CD8-positive, alpha-beta T cell (primary cell): ENCODE measurements at regions of chr19 and their contacts with region 1.

Region 1: GRCh38 chr19:49391581-49392399 is 3.7 kb downstream of the KASH5 start:
- DNase-seq: peak; percentile 61 to 89 (median 81)
- ATAC-seq: peak; percentile 80
- H3K4me3 ChIP-seq: no peak overlapping the region
- H3K4me3 Mint-ChIP-seq: no peak overlapping the region
- H3K27ac ChIP-seq: peak overlapping the region in 1 of 2 experiments; percentile 20
- H3K27ac Mint-ChIP-seq: peak overlapping the region; percentile 46
- H3K4me1 ChIP-seq: peaks cover 16% of the 10 kb centered on the region
- H3K4me1 Mint-ChIP-seq: peaks cover 11% of the 10 kb centered on the region
- H3K27me3 ChIP-seq: no peaks in the 10 kb centered on the region
- H3K27me3 Mint-ChIP-seq: no peaks in the 10 kb centered on the region
- CTCF ChIP-seq: peak; percentile 95

Region 2: GRCh38 chr19:48835734-48836088 is 556.1 kb before region 1 on chr19:
- CTCF ChIA-PET with region 1: no interaction called
- POLR2A ChIA-PET with region 1: no interaction called
- intact Hi-C with region 1: no loop called
- DNase-seq: peak; percentile 87 to 96 (median 92)
- ATAC-seq: peak; percentile 86
- H3K4me3 ChIP-seq: peak overlapping the region; percentile 42 to 51
- H3K4me3 Mint-ChIP-seq: peak overlapping the region; percentile 83
- H3K27ac ChIP-seq: no peak overlapping the region
- H3K27ac Mint-ChIP-seq: peak overlapping the region; percentile 50
- H3K4me1 ChIP-seq: peaks cover 22% of the 10 kb centered on the region
- H3K4me1 Mint-ChIP-seq: peaks cover 20% of the 10 kb centered on the region
- H3K27me3 ChIP-seq: peaks cover 0 to 5% of the 10 kb centered on the region in 2 experiments
- H3K27me3 Mint-ChIP-seq: peaks cover 5% of the 10 kb centered on the region
- CTCF ChIP-seq: peak; percentile 66

Region 3: GRCh38 chr19:49403404-49404187 is 11.8 kb after region 1 on chr19:
- CTCF ChIA-PET with region 1: interaction called, 16 read pairs
- POLR2A ChIA-PET with region 1: interaction called, 3 read pairs
- intact Hi-C with region 1: no loop called
- DNase-seq: no peak
- ATAC-seq: no peak
- H3K4me3 ChIP-seq: no peak overlapping the region
- H3K4me3 Mint-ChIP-seq: no peak overlapping the region
- H3K27ac ChIP-seq: no peak overlapping the region
- H3K27ac Mint-ChIP-seq: no peak overlapping the region
- H3K4me1 ChIP-seq: peaks cover 14% of the 10 kb centered on the region
- H3K4me1 Mint-ChIP-seq: peaks cover 23% of the 10 kb centered on the region
- H3K27me3 ChIP-seq: no peaks in the 10 kb centered on the region
- H3K27me3 Mint-ChIP-seq: no peaks in the 10 kb centered on the region
- CTCF ChIP-seq: no peak

Region 4: DNA sequence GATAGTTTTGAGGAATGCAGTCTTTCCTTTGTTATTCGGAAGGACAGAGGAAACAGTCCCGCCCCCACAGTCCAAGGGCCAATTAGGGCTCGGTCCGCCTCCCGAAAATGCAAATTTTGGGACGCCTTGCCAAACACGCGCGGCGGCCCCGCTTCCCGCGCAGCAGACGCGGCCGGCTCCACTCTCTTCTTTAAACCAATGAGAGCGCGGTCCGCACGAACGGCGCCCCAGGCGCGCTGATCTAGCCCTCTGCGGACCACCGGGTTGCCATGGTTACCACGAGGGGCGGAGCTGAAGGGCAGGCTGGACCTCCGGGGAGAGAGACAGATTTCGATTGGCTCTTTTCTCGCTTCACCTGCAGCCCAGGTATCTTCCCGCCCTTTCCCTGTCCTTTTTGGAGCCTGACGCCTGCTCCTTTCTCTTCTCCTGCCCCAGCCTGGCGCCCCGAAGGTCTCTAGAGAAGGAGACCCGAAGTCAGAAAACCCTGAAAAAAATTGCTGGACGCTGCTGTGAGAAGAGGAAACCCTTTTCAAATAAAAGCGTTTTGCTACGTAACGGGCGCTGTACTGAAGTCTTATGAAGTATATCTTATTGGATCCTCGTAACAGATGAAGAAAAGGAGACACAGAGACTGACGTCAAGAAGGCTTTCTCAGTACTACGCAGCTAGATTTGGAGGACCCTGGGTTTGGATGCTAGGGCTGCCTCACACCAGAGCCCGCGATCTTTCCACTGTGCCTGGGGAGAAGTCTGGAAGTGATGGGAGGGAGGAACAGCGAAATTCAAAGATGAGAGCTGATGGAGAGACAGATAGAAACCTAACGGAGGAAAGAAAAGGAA is 29.5 kb after region 1 on chr19:
- CTCF ChIA-PET with region 1: interaction called, 24 read pairs
- POLR2A ChIA-PET with region 1: no interaction called
- intact Hi-C with region 1: no loop called
- DNase-seq: peak in 4 of 9 experiments; percentile 28 to 54 (median 40)
- ATAC-seq: peak; percentile 50
- H3K4me3 ChIP-seq: no peak overlapping the region
- H3K4me3 Mint-ChIP-seq: peak overlapping the region; percentile 49
- H3K27ac ChIP-seq: no peak overlapping the region
- H3K27ac Mint-ChIP-seq: no peak overlapping the region
- H3K4me1 ChIP-seq: peaks cover 41% of the 10 kb centered on the region
- H3K4me1 Mint-ChIP-seq: peaks cover 45% of the 10 kb centered on the region
- H3K27me3 ChIP-seq: peaks cover 39 to 54% of the 10 kb centered on the region in 2 experiments
- H3K27me3 Mint-ChIP-seq: peaks cover 75% of the 10 kb centered on the region
- CTCF ChIP-seq: no peak

Region 5: DNA sequence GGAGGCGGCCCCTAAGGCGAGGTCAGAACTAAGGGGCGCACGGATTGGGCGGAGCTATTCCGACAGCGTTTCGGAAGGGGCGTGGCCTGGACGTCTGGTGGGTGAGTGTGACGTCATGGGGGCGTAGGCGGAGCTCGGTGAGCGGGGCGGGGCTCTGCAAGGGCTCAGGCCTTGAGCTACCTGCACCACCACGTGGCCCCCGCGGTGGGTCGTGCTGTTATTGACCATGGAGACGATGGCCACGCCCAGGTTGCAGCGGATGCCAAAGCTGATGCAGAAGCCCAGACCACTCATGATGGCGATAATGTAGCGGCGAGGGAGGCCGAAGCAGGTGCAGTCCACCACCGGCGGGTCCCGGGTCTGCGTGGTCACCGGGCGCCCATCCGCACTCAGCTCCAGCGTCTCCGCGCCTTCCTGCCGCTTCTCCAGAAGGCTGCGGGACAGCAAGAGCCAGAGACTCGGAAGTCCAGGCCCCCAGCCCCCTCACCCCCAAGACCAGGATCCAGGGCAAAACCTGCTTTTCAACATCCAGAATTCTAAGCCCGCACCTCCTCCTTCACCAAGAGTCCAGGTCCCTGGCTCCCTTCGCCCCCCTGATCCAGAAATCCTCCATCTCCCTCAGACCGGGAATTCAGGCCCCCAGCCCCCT is 44.7 kb after region 1 on chr19:
- CTCF ChIA-PET with region 1: interaction called, 32 read pairs
- POLR2A ChIA-PET with region 1: interaction called, 3 read pairs
- intact Hi-C with region 1: loop called in 1 of 2 experiments (anchors 2 kb)
- DNase-seq: peak in 5 of 9 experiments; percentile 47 to 76 (median 67)
- ATAC-seq: peak; percentile 58
- H3K4me3 ChIP-seq: no peak overlapping the region
- H3K4me3 Mint-ChIP-seq: no peak overlapping the region
- H3K27ac ChIP-seq: no peak overlapping the region
- H3K27ac Mint-ChIP-seq: no peak overlapping the region
- H3K4me1 ChIP-seq: peaks cover 30% of the 10 kb centered on the region
- H3K4me1 Mint-ChIP-seq: peaks cover 32% of the 10 kb centered on the region
- H3K27me3 ChIP-seq: peaks cover 78 to 86% of the 10 kb centered on the region in 2 experiments
- H3K27me3 Mint-ChIP-seq: peaks cover 78% of the 10 kb centered on the region
- CTCF ChIP-seq: no peak

Region 6: DNA sequence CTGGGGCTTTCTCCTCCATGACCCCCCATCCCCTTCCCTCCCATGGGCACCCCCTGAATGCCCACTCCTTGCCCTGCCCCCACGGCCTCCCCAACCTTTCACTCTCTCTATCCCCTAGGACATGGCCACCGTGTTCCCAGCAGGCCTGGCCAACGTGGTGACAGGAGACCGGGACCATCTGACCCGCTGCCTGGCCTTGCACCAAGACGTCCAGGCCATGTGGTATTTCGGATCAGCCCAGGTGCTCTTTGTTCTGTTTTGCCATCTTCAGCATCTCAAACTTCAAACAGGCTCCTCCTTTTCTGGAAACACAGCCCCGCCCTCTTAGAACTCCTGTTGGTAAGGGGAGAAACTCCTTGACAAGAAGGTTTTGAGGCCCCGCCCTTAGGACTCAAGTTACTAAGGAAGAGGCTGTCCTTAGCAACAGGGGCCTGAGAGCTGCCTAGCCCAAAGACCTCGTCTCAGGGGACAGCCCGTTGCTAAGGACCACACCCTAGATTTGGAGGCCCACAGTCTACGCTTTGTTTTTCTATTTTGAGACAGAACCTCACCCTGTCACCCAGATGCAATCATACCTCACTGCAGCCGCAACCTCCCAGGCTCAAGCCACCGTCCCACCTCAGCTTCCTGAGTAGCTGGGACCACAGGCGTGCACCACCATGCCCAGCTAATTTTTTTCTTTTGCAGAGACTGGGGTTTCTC is 77.1 kb after region 1 on chr19:
- CTCF ChIA-PET with region 1: interaction called, 57 read pairs
- POLR2A ChIA-PET with region 1: interaction called, 8 read pairs
- intact Hi-C with region 1: loop called (anchors 1 kb)
- DNase-seq: peak; percentile 73 to 98 (median 91)
- ATAC-seq: peak; percentile 70
- H3K4me3 ChIP-seq: peak overlapping the region in 1 of 2 experiments; percentile 9
- H3K4me3 Mint-ChIP-seq: peak overlapping the region; percentile 69
- H3K27ac ChIP-seq: peak overlapping the region; percentile 88 to 90
- H3K27ac Mint-ChIP-seq: peak overlapping the region; percentile 99
- H3K4me1 ChIP-seq: peaks cover 55% of the 10 kb centered on the region
- H3K4me1 Mint-ChIP-seq: peaks cover 44% of the 10 kb centered on the region
- H3K27me3 ChIP-seq: no peaks in the 10 kb centered on the region
- H3K27me3 Mint-ChIP-seq: no peaks in the 10 kb centered on the region
- CTCF ChIP-seq: no peak

Region 7: DNA sequence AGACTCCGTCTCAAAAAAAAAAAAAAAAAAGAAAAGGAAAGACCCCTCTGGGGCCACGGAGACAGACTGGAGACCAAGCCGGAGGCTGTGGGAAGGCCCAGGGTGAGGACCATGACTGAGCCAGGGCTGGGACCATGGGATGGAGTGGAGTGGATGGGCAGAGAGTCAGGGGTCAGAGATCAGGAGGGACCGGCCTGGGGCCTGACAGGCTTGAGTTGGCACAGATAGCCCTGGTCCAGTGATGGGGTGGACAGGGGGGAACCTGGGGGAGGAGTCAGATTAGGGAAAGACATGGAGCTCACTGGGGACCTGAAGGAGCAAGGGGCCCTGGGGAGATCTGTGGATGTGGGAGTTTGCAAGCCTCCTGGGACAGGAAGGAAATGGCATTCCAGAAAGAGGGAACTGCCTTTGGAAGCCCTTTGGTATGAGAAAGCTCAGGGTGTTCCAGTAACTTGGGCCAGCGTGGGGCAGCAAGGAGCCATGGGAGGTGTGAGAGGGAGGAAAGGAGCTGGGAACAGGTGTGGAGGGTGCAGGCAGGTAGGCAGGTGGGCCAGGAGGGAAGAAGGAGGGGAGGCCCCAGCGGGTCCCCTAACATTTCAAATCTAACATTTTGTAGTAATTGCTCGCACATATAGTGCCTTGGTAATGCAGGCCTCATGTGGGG is 89.4 kb after region 1 on chr19:
- CTCF ChIA-PET with region 1: interaction called, 10 read pairs
- POLR2A ChIA-PET with region 1: no interaction called
- intact Hi-C with region 1: loop called (anchors 1 kb)
- DNase-seq: no peak
- ATAC-seq: no peak
- H3K4me3 ChIP-seq: no peak overlapping the region
- H3K4me3 Mint-ChIP-seq: no peak overlapping the region
- H3K27ac ChIP-seq: no peak overlapping the region
- H3K27ac Mint-ChIP-seq: peak overlapping the region; percentile 13
- H3K4me1 ChIP-seq: peaks cover 26% of the 10 kb centered on the region
- H3K4me1 Mint-ChIP-seq: peaks cover 27% of the 10 kb centered on the region
- H3K27me3 ChIP-seq: no peaks in the 10 kb centered on the region
- H3K27me3 Mint-ChIP-seq: no peaks in the 10 kb centered on the region
- CTCF ChIP-seq: no peak